ENCODE measurements at regions of chr11 and their contacts with region 1.

Region 1: GRCh38 chr11:102115557-102115956 is 5.3 kb downstream of the YAP1 start:
- DNase-seq: peak; percentile 54
- H3K4me3 Mint-ChIP-seq: no peak overlapping the region
- H3K27ac Mint-ChIP-seq: no peak overlapping the region
- H3K4me1 Mint-ChIP-seq: peaks cover 25% of the 10 kb centered on the region
- H3K27me3 Mint-ChIP-seq: no peaks in the 10 kb centered on the region
- CTCF ChIP-seq: no peak

Region 2: GRCh38 chr11:102139081-102139498 is 23.5 kb after region 1 on chr11:
- CTCF ChIA-PET with region 1: interaction called, 4 read pairs
- POLR2A ChIA-PET with region 1: interaction called, 18 read pairs
- intact Hi-C with region 1: loop called (anchors 2 kb)
- DNase-seq: peak; percentile 72
- H3K4me3 Mint-ChIP-seq: peak overlapping the region; percentile 55
- H3K27ac Mint-ChIP-seq: peak overlapping the region; percentile 91
- H3K4me1 Mint-ChIP-seq: peaks cover 30% of the 10 kb centered on the region
- H3K27me3 Mint-ChIP-seq: no peaks in the 10 kb centered on the region
- CTCF ChIP-seq: no peak

Region 3: DNA sequence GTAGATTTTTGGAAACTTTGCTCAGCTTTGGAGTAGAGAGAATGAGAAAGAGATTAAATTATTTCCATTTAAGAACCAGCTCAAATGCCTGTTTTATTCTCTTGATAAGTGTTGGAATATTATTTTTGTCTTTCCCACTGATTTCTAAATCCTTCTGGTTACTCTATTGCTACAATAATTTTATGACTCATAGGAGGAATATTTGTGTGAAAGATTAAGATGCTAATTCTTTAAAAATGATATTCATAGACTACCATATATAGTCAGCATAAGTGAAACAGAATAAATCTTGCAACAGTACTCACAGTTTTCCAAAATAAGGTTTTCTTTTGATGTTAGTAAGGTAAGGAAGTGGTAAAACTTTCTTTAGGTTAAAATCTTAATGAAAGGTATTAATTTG is 55.5 kb after region 1 on chr11:
- CTCF ChIA-PET with region 1: no interaction called
- POLR2A ChIA-PET with region 1: interaction called, 21 read pairs
- intact Hi-C with region 1: loop called (anchors 2 kb)
- DNase-seq: peak; percentile 64
- H3K4me3 Mint-ChIP-seq: no peak overlapping the region
- H3K27ac Mint-ChIP-seq: peak overlapping the region; percentile 76
- H3K4me1 Mint-ChIP-seq: peaks cover 34% of the 10 kb centered on the region
- H3K27me3 Mint-ChIP-seq: no peaks in the 10 kb centered on the region
- CTCF ChIP-seq: no peak

Region 4: DNA sequence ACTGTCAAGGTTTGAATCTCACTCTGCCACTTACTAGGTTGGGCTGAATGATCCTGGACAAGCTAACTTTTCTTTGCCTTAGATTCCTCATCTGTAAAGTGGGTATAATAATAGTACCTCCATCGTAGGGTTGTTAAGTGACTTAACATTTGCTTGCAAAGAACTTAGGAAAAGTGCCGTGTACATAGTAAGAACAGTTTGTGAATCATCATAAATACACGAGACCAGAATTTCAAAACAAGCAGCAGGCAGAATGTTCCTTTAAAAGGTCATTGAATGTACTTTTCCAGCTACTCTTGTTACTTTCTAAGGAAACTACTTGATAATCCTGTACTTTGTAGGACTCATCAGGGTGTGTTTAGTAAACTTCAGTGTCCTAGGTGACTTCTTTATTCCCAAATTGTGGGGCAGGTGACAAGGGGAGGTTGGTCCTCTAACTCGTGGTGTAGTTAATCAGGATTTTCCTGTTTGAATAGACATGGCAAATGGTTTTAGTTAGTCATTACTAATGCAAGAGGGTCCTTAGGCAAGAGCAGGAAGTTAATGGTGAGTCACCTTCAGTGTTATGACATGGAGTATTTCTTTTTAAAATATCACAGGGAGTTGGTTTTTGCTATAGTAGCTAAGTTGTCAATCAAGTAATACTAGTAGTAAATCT is 62.5 kb after region 1 on chr11:
- CTCF ChIA-PET with region 1: interaction called, 3 read pairs
- POLR2A ChIA-PET with region 1: interaction called, 21 read pairs
- intact Hi-C with region 1: loop called (anchors 1 kb)
- DNase-seq: peak; percentile 92
- H3K4me3 Mint-ChIP-seq: peak overlapping the region; percentile 49
- H3K27ac Mint-ChIP-seq: peak overlapping the region; percentile 17
- H3K4me1 Mint-ChIP-seq: peaks cover 38% of the 10 kb centered on the region
- H3K27me3 Mint-ChIP-seq: no peaks in the 10 kb centered on the region
- CTCF ChIP-seq: no peak

Measured in MCF 10A (cell line).